Left cardiac atrium (tissue), 4 donors: ENCODE measurements at regions of chr14 and their contacts with region 1.

Region 1: DNA sequence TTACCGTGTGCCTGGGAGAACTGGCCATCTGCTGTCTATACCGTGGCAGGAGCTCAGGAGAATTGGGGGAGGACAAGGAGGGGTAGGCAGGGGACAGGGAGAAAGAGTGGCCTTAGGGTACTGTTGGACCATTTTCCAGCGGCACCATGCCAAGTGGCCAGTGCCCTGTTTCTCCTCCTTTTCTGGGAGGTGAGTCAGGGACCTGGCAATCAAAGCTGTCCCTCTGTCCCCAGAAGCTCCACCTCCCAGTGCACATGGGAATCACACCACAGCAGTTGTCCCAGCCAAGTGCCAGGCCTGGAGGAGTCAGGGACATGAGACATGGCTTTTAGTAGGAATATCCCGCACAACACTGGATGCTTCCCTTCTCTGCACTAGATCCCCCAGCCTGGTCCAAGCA is 118.0 kb downstream of the GCH1 start:
- DNase-seq: peak; percentile 71
- ATAC-seq: peak; percentile 79 to 83

Region 2: DNA sequence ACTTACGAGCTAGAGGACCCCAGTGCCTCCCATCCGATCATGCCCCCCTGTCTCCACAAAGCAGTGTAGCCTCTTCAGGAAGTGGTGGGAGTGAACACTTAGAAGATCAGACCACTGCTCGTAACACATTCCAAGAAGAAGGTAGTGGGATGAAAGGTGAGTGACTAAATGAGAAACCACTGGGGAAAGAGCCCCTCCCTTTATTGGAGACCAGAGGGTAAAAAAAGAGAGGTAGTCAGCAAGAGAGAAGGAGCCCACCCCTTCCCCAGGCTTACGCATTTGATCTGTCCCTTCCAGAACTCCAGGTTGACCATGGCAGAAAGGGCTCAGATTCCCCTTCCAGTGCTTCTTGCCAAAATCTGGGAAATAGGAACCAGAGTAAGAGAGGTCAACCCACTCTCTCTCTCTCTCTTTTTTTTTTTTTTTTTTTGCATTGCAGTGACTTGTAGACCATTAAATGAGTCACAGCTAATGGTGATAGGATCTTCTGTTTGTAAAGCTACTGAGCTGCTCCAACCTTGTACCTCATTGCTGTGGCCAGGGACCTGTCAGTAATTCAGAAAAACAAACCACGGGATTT is 47.4 kb before region 1 on chr14:
- intact Hi-C with region 1: loop called in 1 of 2 experiments (anchors 1 kb)
- DNase-seq: no peak
- ATAC-seq: peak in 1 of 2 donors; percentile 17

Region 3: DNA sequence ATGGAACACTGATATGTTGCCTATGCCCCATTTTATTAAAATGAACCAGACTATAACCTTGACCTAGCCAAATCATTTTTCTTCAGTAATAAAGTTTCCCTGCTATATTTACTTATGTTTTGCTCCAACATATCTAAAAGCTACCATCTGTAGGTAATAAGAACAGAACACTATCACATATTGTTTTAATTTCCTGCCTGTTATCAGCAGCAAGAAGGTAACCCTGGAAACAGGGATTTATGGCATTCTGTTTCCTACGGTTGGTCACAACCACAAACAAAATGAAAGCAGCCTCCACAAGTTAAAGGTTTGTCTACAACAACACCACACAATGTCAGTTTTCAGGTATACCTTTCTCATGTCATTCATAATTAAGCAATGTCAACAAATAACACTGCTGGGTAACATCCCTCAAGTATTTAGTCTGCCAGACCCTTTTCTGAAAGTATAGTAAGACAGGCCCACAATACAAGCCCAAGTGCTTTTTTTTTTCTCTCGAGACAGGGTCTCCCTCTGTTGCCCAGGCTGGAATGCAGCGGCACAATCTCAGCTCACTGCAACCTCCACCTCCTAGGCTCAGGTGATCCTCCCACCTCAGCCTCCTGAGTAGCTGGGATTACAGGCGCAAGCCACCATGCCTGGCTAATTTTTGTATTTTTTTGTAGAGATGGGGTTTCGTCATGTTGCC is 92.5 kb after region 1 on chr14:
- intact Hi-C with region 1: no loop called
- DNase-seq: no peak
- ATAC-seq: no peak

Region 4: DNA sequence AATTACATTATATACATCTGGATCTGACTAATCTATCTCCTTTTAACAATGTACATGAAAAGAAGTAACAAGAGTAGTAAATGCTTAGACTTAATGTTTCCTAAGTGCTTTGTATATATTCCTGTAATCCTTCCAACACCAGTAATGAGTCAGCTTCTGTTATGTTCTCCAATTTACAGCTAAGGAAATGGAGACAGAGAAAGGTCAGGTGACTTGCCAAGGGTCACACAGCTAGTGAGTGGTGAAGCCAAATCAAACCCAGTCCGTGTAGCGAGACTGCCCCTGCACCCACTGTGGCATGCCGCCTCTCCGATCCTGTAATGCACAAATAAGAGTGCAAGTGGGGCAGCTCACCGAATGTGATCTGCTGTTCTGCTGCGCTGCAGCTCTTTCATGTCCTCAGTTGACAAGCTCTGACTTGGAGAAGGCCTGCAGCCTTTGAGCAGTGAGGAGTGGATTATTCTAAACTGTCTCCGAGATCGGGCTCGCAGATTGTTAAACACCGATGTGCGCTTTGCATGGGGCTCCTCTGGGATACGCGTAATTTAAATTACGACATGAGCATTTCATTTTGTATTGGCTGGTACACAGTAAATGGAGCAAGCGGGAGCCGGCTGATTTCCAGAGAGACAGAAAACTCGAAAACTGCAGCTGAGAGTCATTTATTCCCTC is 730.3 kb after region 1 on chr14:
- intact Hi-C with region 1: no loop called
- DNase-seq: peak; percentile 22
- ATAC-seq: no peak